MCF 10A (cell line): ENCODE measurements at regions of chr10 and their contacts with region 1.

Region 1: GRCh38 chr10:70233109-70233938 is at the start of gene PPA1:
- DNase-seq: peak; percentile 96
- H3K4me3 Mint-ChIP-seq: peak within 1 kb of the TSS; percentile 90
- H3K27ac Mint-ChIP-seq: peak within 1 kb of the TSS; percentile 97
- H3K4me1 Mint-ChIP-seq: peaks cover 32% of the 10 kb centered on the region
- H3K27me3 Mint-ChIP-seq: no peaks in the 10 kb centered on the region
- CTCF ChIP-seq: no peak
- total RNA-seq, gene PPA1: 221 and 293 TPM in 2 replicates

Region 2: DNA sequence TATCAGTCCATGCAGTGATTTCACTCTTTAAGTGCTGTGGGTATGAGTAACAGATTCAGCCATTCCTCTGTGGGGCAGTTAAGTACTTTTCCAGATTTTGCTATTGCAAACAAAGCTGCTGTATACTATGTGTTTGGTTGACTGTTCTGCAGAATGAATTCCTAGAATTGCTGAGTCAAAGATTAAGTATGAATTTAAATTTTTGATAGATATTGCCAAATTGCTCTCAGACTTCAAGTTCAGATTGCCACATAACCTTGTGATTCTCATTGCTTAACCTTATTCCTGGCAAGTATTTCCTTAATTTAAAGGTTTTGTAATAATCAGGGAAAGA is 41.4 kb before region 1 on chr10:
- CTCF ChIA-PET with region 1: interaction called, 3 read pairs
- POLR2A ChIA-PET with region 1: interaction called, 22 read pairs
- intact Hi-C with region 1: no loop called
- DNase-seq: peak; percentile 86
- H3K4me3 Mint-ChIP-seq: peak overlapping the region; percentile 16
- H3K27ac Mint-ChIP-seq: peak overlapping the region; percentile 73
- H3K4me1 Mint-ChIP-seq: peaks cover 41% of the 10 kb centered on the region
- H3K27me3 Mint-ChIP-seq: no peaks in the 10 kb centered on the region
- CTCF ChIP-seq: no peak

Region 3: DNA sequence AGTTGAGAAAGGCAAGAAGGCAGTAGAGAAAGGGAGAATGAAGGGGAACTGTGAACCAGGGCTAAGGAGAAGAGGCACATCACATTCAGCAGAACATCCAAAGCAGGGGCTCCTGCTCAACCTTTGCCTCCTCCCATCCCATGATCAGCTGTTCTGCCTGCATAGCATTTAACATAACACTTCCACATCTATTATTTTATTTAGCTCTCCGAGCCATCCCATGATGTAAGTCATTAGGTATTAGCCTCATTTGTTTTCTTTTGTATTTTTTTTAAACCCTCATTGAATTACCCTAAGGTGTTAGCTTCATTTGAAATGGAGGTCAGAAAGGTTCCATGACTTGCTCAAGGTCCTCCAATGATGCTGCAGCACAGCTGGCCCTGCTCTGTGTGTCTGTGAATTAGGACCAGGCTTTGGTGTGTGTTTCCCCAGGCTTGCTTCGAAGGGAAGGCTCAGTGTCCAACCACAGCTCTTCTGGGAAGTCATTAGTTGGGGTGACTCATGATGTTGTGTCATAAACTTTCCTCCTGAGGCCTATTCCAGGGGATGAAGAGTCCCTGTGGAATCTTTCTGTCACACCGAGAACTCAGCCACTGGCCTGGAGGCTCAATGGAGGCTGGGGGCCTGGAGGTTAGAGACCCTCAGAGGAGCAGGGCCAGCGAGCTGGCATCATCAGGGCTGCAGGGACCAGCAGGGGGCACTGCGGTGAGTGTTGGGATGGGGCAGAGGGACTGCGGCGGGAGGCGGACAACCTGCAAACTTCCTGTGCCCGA is 34.0 kb after region 1 on chr10:
- CTCF ChIA-PET with region 1: interaction called, 4 read pairs
- POLR2A ChIA-PET with region 1: interaction called, 43 read pairs
- intact Hi-C with region 1: loop called (anchors 1 kb)
- DNase-seq: peak; percentile 95
- H3K4me3 Mint-ChIP-seq: peak overlapping the region; percentile 3
- H3K27ac Mint-ChIP-seq: peak overlapping the region; percentile 92
- H3K4me1 Mint-ChIP-seq: peaks cover 30% of the 10 kb centered on the region
- H3K27me3 Mint-ChIP-seq: no peaks in the 10 kb centered on the region
- CTCF ChIP-seq: peak; percentile 43

Region 4: DNA sequence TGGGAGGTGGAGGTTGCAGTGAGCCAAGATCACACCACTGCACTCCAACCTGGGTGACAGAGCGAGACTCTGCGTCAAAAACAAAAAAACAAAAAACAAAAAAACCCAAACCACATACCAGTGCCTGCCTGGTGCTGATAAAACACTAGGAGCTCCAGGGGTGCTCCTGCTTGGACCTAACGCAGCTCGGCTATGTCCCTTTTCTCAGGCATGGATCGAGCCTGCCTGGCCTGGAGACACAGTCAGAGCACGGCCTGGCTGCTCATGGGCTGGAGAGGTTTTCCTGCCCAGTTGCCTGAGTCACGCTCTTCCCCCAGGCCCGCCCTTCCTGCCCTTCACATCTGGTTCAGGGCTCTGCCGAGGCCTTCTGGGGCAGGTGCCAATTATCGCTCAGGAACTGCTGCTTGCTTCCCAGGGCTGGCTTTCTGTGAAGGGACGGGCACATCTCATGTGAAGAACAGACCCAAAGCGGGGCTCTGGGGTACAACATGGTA is 63.1 kb after region 1 on chr10:
- CTCF ChIA-PET with region 1: interaction called, 3 read pairs
- POLR2A ChIA-PET with region 1: interaction called, 17 read pairs
- intact Hi-C with region 1: no loop called
- DNase-seq: peak; percentile 94
- H3K4me3 Mint-ChIP-seq: no peak overlapping the region
- H3K27ac Mint-ChIP-seq: peak overlapping the region; percentile 80
- H3K4me1 Mint-ChIP-seq: peaks cover 17% of the 10 kb centered on the region
- H3K27me3 Mint-ChIP-seq: no peaks in the 10 kb centered on the region
- CTCF ChIP-seq: no peak

Region 5: GRCh38 chr10:70355051-70356021 is 122.0 kb after region 1 on chr10:
- CTCF ChIA-PET with region 1: interaction called, 232 read pairs
- POLR2A ChIA-PET with region 1: interaction called, 14 read pairs
- intact Hi-C with region 1: no loop called
- DNase-seq: no peak
- H3K4me3 Mint-ChIP-seq: no peak overlapping the region
- H3K27ac Mint-ChIP-seq: no peak overlapping the region
- H3K4me1 Mint-ChIP-seq: peaks cover 21% of the 10 kb centered on the region
- H3K27me3 Mint-ChIP-seq: no peaks in the 10 kb centered on the region
- CTCF ChIP-seq: no peak

Region 6: GRCh38 chr10:70404036-70404786 is 170.9 kb after region 1 on chr10 and contains the start of gene EIF4EBP2:
- CTCF ChIA-PET with region 1: interaction called, 3 read pairs
- POLR2A ChIA-PET with region 1: interaction called, 62 read pairs
- intact Hi-C with region 1: no loop called
- DNase-seq: peak; percentile 96
- H3K4me3 Mint-ChIP-seq: peak within 1 kb of the TSS; percentile 84
- H3K27ac Mint-ChIP-seq: peak within 1 kb of the TSS; percentile 89
- H3K4me1 Mint-ChIP-seq: peaks cover 20% of the 10 kb centered on the region
- H3K27me3 Mint-ChIP-seq: no peaks in the 10 kb centered on the region
- CTCF ChIP-seq: no peak
- total RNA-seq, gene EIF4EBP2: 21.2 and 26.1 TPM in 2 replicates